ENCODE measurements at regions of chr3 and their contacts with region 1.

Region 1: GRCh38 chr3:124351430-124352148 is 359.7 kb upstream of the ROPN1 start:
- DNase-seq: peak; percentile 15 to 33
- H3K4me3 ChIP-seq: no peak overlapping the region
- H3K27ac ChIP-seq: no peak overlapping the region
- H3K4me1 ChIP-seq: no peaks in the 10 kb centered on the region
- H3K27me3 ChIP-seq: no peaks in the 10 kb centered on the region
- CTCF ChIP-seq: peak in 5 of 6 experiments; percentile 17 to 85 (median 66)
- POLR2A ChIP-seq: no peak

Region 2: DNA sequence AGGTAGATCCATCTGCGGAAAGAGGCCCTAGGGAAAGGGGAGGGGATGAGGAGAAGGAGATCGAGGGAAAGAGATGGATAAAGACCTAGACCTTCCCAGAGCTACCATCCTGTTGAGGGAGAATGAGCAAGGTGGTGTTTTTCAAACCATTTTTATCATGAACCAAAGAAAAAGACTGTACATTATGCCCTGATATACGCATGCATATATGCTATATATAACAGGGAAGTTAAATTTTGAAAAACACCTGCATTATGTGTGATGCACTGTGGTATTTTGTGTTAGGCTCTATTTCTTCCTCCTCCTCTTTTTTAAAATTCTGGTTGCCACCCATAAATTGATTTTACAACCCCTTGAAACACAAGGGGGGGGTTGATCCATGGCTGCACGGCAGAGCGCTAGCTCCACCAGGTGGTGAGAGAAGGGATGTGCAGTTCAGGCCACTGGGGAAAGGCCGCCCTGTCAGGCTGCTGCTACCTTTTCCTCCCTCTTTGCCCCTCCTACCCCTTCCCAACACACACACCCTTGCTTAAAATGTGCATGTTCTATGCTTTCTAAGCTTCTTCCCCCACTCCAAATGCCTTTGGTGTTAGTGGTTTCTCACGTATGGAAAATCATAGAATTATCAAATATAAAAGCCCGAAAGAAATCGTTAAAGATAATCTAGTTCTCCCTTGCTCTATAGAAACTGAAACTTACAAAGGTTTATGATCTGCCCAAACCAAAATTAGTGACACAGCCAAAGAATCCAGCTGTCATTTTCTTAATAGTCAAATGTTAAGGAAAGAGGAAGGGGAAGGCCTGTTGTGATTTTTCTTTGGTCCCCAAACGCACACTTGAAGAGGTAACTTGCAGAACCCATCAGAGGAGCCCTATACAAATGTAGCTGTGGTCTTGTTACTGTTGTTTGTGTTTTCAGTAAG is 116.7 kb after region 1 on chr3:
- intact Hi-C with region 1: loop called (anchors 2 kb)
- DNase-seq: peak; percentile 35 to 41
- H3K4me3 ChIP-seq: no peak overlapping the region
- H3K27ac ChIP-seq: no peak overlapping the region
- H3K4me1 ChIP-seq: no peaks in the 10 kb centered on the region
- H3K27me3 ChIP-seq: no peaks in the 10 kb centered on the region
- CTCF ChIP-seq: peak; percentile 75 to 95 (median 87)
- POLR2A ChIP-seq: no peak

Region 3: DNA sequence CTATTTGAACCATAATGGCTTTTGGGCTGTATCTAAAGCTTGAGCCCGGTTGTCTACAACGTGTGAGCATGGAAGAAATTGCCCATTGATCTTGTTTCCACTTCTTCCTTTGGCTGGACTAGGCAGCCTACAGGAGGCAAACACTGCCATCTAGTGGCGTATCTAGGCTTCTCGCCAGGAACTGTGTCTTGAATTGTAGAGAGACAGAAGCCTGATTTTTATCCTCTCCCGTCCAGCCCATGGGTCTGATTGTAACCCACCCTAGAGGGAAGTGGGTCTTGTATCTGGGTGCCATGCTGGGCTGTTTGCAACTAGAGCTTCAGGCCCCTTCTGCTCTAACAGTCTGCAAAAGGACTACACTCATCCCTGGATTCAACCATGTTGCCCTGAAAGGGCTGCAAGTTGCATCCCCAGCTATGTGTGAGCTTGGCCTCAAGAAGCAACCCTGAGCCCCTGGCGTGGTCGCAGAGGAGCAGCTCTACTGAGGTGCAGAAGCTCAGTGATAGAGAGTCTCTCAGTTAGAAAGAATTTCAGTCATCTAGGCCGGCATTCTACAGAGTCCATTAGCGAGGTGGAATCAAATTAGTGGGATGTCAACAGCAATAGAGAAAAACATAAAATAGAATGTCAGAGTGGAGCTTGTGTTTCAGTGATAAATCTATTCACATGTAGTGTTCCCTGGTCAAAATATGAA is 208.4 kb after region 1 on chr3:
- intact Hi-C with region 1: loop called (anchors 10 kb)
- DNase-seq: peak; percentile 73 to 80
- H3K4me3 ChIP-seq: no peak overlapping the region
- H3K27ac ChIP-seq: peak overlapping the region; percentile 39 to 88 (median 66)
- H3K4me1 ChIP-seq: peaks cover 12 to 16% of the 10 kb centered on the region in 2 donors
- H3K27me3 ChIP-seq: no peaks in the 10 kb centered on the region
- CTCF ChIP-seq: peak; percentile 65 to 90 (median 78)
- POLR2A ChIP-seq: no peak

Region 4: GRCh38 chr3:125129512-125129962 is 777.9 kb after region 1 on chr3:
- intact Hi-C with region 1: no loop called
- DNase-seq: peak; percentile 90 to 92
- H3K4me3 ChIP-seq: no peak overlapping the region
- H3K27ac ChIP-seq: peak overlapping the region; percentile 83 to 98 (median 96)
- H3K4me1 ChIP-seq: peaks cover 42 to 69% of the 10 kb centered on the region in 2 donors
- H3K27me3 ChIP-seq: no peaks in the 10 kb centered on the region
- CTCF ChIP-seq: peak in 1 of 6 experiments; percentile 11
- POLR2A ChIP-seq: no peak